ENCODE measurements at regions of chr20 and their contacts with region 1.

Region 1: GRCh38 chr20:44111712-44112335 is 75.2 kb downstream of the JPH2 start:
- DNase-seq: no peak
- H3K4me3 Mint-ChIP-seq: no peak overlapping the region
- H3K27ac Mint-ChIP-seq: no peak overlapping the region
- H3K4me1 Mint-ChIP-seq: peaks cover 4% of the 10 kb centered on the region
- H3K27me3 Mint-ChIP-seq: peaks cover 36% of the 10 kb centered on the region

Region 2: DNA sequence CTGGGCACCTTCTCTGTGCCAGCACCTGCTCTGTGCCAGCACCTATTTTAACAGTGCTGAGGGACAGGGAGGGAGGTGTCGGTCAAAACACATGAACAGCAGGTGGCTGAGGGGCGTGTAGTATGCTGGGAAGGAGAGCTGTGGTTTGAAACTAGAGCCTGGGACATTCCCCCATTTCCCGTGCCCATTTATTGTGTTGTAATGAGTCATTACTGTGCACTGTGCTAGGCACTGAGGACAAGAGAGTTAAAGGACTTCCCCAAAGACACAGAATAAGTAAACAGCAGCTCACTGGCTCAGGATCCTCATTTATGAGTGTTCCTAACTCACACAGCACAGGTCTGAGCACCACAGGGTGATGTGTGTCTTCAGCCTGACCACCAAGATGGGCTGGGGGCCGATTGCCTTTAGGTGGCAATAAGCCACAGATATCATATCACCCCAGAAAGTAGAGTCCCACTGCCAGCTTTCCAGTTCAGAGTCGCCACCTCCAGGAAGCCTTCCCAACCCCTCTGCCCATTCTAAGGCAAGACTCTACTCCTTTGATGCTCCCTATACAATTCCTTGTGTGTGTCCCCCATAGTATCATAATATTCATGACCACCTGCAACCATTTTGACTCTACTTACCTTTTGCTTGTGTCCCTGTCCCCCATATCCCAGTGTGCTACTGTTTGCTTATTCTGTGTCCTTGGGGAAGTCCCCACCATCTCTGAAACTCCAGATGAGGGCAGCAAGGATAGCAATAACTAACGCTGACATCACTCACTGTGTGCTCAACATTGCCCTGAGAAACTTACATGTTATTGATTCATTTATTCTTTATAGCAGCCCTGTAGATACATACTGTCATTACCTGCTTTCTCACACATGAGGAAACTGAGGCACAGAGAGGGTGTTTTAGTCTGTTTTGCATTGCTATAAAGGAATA is 109.9 kb before region 1 on chr20:
- CTCF ChIA-PET with region 1: no interaction called
- intact Hi-C with region 1: no loop called
- DNase-seq: peak; percentile 71
- H3K4me3 Mint-ChIP-seq: no peak overlapping the region
- H3K27ac Mint-ChIP-seq: peak overlapping the region; percentile 0
- H3K4me1 Mint-ChIP-seq: peaks cover 14% of the 10 kb centered on the region
- H3K27me3 Mint-ChIP-seq: peaks cover 3% of the 10 kb centered on the region

Region 3: GRCh38 chr20:44187051-44187762 is 75.4 kb after region 1 on chr20 and contains the start of gene JPH2:
- CTCF ChIA-PET with region 1: interaction called, 116 read pairs
- intact Hi-C with region 1: loop called (anchors 1 kb)
- DNase-seq: no peak
- H3K4me3 Mint-ChIP-seq: peak within 1 kb of the TSS; percentile 7
- H3K27ac Mint-ChIP-seq: no peak within 1 kb of the TSS
- H3K4me1 Mint-ChIP-seq: peaks cover 8% of the 10 kb centered on the region
- H3K27me3 Mint-ChIP-seq: peaks cover 41% of the 10 kb centered on the region
- total RNA-seq, gene JPH2: not detected

Region 4: GRCh38 chr20:44196271-44196670 is 84.4 kb after region 1 on chr20:
- CTCF ChIA-PET with region 1: interaction called, 116 read pairs
- intact Hi-C with region 1: no loop called
- DNase-seq: no peak
- H3K4me3 Mint-ChIP-seq: no peak overlapping the region
- H3K27ac Mint-ChIP-seq: no peak overlapping the region
- H3K4me1 Mint-ChIP-seq: peaks cover 18% of the 10 kb centered on the region
- H3K27me3 Mint-ChIP-seq: no peaks in the 10 kb centered on the region

Region 5: GRCh38 chr20:44388466-44389023 is 276.7 kb after region 1 on chr20:
- CTCF ChIA-PET with region 1: no interaction called
- intact Hi-C with region 1: loop called (anchors 1 kb)
- DNase-seq: peak; percentile 90
- H3K4me3 Mint-ChIP-seq: peak overlapping the region; percentile 22
- H3K27ac Mint-ChIP-seq: no peak overlapping the region
- H3K4me1 Mint-ChIP-seq: peaks cover 11% of the 10 kb centered on the region
- H3K27me3 Mint-ChIP-seq: peaks cover 3% of the 10 kb centered on the region

Measured in activated naive CD4-positive, alpha-beta T cell treated with anti-CD3 and anti-CD28 coated beads for 36 hours (primary cell).